Activated CD8-positive, alpha-beta memory T cell treated with anti-CD3 and anti-CD28 coated beads, Interleukin-2, amount 10 ng/mL, durations not matched to agents 7 days and 5 days (primary cell): ENCODE measurements at regions of chr9 and their contacts with region 1.

Region 1: DNA sequence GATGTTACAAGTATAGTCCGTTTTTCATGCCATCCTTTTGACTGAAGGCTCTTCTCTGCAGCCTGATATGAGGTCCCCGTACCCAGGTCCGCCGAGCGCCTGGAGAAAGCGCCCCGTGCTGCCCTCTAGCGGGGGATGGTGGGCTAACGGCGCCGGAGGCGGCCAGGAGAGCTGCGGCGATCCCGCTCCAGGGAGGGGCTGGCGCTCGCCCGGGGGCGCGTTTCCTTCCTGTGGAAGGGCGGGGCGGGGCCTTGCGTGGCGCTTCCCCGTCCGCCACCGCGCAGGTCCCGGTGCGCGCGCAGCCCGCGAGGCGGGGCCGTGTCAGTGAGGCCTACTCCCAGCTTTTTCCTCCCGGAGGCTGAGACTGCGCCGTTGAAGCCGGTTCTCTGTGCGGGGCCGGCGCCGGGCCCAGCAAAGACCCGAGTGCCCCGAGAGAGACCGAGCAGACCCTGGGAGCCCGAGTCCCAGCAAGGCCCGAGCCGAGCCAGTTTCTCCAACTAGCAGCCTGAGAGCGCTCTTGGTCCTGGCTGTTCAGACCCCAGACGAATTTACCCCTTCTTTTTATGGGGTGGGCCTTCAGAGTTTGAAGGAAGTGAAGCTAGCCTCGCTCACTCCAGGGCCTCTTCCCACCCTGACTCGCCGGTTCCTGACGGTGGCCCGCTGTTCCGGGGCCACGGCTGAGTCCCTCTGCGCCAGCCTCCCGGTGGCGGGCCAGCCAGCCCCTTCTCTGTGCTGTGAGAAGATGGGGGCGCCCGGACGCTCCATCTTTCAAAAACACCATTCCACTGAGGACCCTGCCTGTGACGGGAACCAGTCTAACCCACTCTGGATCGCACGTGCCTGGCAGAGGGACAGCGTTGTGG is 9.7 kb upstream of the PHF2 start:
- DNase-seq: peak; percentile 98
- ATAC-seq: peak; percentile 98
- H3K4me3 Mint-ChIP-seq: peak overlapping the region; percentile 78
- H3K27ac Mint-ChIP-seq: peak overlapping the region; percentile 91
- H3K4me1 Mint-ChIP-seq: peaks cover 28% of the 10 kb centered on the region
- H3K27me3 Mint-ChIP-seq: no peaks in the 10 kb centered on the region

Region 2: DNA sequence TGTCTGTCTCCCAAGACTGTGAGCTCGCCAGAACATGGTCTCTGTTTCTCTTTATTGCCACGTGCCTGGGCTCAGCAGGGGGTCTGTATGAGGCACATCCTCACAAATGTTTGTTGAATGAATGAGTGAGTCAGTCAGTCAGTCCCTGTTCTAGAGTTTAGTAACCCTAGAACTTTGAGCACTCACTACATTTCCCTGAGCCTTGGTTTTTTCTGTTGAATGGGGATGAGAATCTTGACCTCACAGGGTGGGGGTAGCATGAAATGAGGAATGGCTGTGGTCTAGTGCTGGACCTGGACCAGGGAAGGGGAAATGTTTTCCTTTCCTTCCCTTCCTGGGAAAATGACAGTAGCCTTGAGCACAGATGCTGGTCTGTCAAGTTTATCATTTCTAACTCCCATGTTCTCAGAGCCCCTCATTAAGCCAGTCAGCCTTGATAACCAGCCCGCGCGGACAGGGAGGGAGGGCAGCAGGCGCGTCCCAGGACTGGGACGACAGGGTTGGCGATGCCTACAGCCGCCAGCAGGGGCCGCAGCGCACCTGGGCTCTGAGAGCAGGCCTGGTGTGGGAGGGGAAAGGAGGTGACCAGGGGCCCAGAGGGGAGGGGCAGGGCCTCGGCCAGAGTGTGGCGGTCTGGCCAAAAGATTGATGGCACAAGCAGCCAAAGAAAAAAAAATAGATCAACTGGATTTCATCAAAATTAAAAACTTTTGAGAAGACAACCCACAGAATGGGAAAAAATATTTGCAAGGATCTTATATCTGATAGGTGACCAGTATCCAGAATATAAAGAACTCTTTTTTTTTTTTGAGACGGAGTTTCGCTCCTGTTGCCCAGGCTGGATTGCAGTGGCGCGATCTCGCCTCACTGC is 406.8 kb before region 1 on chr9:
- CTCF ChIA-PET with region 1: interaction called, 12 read pairs
- DNase-seq: peak; percentile 79
- ATAC-seq: peak; percentile 85
- H3K4me3 Mint-ChIP-seq: no peak overlapping the region
- H3K27ac Mint-ChIP-seq: no peak overlapping the region
- H3K4me1 Mint-ChIP-seq: peaks cover 25% of the 10 kb centered on the region
- H3K27me3 Mint-ChIP-seq: no peaks in the 10 kb centered on the region

Region 3: GRCh38 chr9:93446073-93446472 is 120.6 kb before region 1 on chr9:
- CTCF ChIA-PET with region 1: interaction called, 31 read pairs
- DNase-seq: no peak
- ATAC-seq: no peak
- H3K4me3 Mint-ChIP-seq: no peak overlapping the region
- H3K27ac Mint-ChIP-seq: peak overlapping the region; percentile 7
- H3K4me1 Mint-ChIP-seq: peaks cover 27% of the 10 kb centered on the region
- H3K27me3 Mint-ChIP-seq: no peaks in the 10 kb centered on the region

Region 4: GRCh38 chr9:93453047-93453914 is 113.4 kb before region 1 on chr9 and contains the start of gene FAM120AOS:
- CTCF ChIA-PET with region 1: interaction called, 31 read pairs
- DNase-seq: peak; percentile 93
- ATAC-seq: peak; percentile 77
- H3K4me3 Mint-ChIP-seq: peak within 1 kb of the TSS; percentile 86
- H3K27ac Mint-ChIP-seq: peak within 1 kb of the TSS; percentile 93
- H3K4me1 Mint-ChIP-seq: peaks cover 52% of the 10 kb centered on the region
- H3K27me3 Mint-ChIP-seq: no peaks in the 10 kb centered on the region
- total RNA-seq, gene FAM120AOS: 36.2 to 41.2 TPM

Region 5: DNA sequence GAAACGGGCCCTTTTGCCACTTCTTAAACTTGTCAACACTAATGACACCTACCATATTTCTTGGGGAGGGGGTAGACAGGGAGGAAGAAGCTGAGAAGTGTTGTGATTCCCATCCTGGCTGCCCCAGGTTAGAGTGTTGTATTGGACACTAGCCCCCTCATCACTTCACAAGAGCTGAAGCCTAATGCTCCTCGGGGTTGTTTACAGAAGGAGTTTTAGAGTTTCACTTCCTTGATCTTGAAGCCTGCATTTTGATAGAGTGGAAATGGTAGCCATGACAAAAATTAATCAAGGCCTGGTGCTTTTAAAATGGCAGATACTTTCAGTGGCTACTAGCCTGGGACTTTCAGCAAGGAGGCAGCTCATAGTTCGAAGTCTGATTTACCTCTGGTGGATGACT is 102.2 kb before region 1 on chr9:
- CTCF ChIA-PET with region 1: interaction called, 21 read pairs
- DNase-seq: no peak
- ATAC-seq: peak; percentile 14
- H3K4me3 Mint-ChIP-seq: peak overlapping the region; percentile 50
- H3K27ac Mint-ChIP-seq: peak overlapping the region; percentile 92
- H3K4me1 Mint-ChIP-seq: peaks cover 84% of the 10 kb centered on the region
- H3K27me3 Mint-ChIP-seq: no peaks in the 10 kb centered on the region

Region 6: GRCh38 chr9:93552923-93553322 is 13.7 kb before region 1 on chr9:
- CTCF ChIA-PET with region 1: interaction called, 15 read pairs
- DNase-seq: no peak
- ATAC-seq: no peak
- H3K4me3 Mint-ChIP-seq: no peak overlapping the region
- H3K27ac Mint-ChIP-seq: no peak overlapping the region
- H3K4me1 Mint-ChIP-seq: no peaks in the 10 kb centered on the region
- H3K27me3 Mint-ChIP-seq: no peaks in the 10 kb centered on the region

Region 7: GRCh38 chr9:93589691-93590090 is 23.1 kb after region 1 on chr9:
- CTCF ChIA-PET with region 1: no interaction called
- DNase-seq: peak; percentile 32
- ATAC-seq: no peak
- H3K4me3 Mint-ChIP-seq: no peak overlapping the region
- H3K27ac Mint-ChIP-seq: peak overlapping the region; percentile 44
- H3K4me1 Mint-ChIP-seq: peaks cover 8% of the 10 kb centered on the region
- H3K27me3 Mint-ChIP-seq: no peaks in the 10 kb centered on the region